ENCODE measurements at regions of chr9 and their contacts with region 1.

Region 1: DNA sequence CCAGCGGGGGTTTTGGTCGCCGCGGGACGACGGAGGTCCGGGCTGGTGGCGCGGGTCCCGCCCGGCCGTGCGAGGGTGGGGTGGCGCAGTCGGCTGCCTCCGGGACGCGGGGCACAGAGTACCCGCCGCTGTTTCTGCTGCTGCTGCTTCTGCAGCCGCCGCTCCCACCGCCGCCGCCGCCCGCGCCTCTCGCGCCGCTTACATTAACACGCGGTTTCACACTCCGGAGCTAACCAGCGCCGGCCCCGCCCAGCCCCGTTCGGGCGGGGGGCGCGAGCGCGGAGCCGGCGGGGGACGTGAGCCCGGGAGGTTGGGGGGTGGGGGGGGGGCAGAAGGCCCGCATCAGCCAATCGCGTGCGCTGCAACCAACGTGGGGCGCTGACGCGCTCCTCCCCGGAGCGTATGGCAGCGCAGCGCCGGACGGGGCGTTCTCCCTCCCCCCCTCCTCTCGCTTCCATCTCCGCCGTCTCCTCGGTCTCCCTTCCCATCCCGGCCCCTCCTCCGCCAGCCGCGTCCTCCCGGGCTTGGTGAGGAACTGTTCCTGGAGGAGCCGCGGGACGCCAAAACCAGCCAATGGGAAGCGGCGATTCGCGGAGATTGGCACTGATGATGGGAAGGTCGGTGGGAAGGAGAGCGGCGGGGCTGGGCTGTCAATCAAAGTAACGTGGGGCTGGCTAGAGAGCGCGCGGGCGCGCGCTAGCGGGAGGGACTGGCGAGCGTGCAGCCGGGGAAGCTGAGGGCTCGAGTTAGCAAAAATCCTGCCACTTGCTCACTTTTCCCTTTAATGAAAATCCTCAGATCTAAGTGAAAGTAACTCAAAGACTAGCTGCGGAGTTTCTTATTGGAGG is at the start of gene TLE1:
- DNase-seq: peak; percentile 100
- H3K4me3 ChIP-seq: peak within 1 kb of the TSS; percentile 64 to 66
- H3K27ac ChIP-seq: peak within 1 kb of the TSS; percentile 79 to 85
- H3K4me1 ChIP-seq: no peaks in the 10 kb centered on the region
- H3K27me3 ChIP-seq: no peaks in the 10 kb centered on the region
- CTCF ChIP-seq: peak in 1 of 4 experiments; percentile 15
- POLR2A ChIP-seq: peak; percentile 74
- total RNA-seq, gene TLE1: 61.0 to 89.5 TPM

Region 2: GRCh38 chr9:80797831-80798688 is 891.5 kb before region 1 on chr9:
- intact Hi-C with region 1: loop called (anchors 5 kb)
- DNase-seq: peak; percentile 52
- H3K4me3 ChIP-seq: no peak overlapping the region
- H3K27ac ChIP-seq: peak overlapping the region; percentile 15 to 38
- H3K4me1 ChIP-seq: no peaks in the 10 kb centered on the region
- H3K27me3 ChIP-seq: no peaks in the 10 kb centered on the region
- CTCF ChIP-seq: no peak
- POLR2A ChIP-seq: no peak

Region 3: DNA sequence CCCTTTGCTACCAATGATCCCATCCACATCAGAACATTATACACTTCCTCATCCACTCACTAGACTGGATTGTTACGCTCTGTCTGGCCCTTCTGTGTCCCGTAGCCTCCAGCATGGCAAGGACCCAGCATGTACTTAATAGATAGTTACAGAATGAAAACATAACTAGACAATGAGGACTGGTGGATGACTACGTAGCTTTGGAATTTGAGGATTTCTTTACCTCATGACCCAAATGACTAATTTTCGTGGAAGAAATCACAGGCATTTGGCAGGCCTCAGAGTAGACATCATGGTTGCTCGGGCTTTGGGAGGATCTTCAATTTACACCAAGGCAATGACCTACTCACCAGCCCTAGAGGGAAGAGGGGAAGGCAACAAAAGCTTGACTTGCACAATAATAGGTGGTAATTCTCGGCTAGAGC is 300.0 kb before region 1 on chr9:
- intact Hi-C with region 1: loop called (anchors 5 kb)
- DNase-seq: no peak
- H3K4me3 ChIP-seq: no peak overlapping the region
- H3K27ac ChIP-seq: no peak overlapping the region
- H3K4me1 ChIP-seq: no peaks in the 10 kb centered on the region
- H3K27me3 ChIP-seq: no peaks in the 10 kb centered on the region
- CTCF ChIP-seq: no peak
- POLR2A ChIP-seq: no peak

Region 4: GRCh38 chr9:81529556-81530195 is 159.9 kb before region 1 on chr9:
- intact Hi-C with region 1: loop called (anchors 10 kb)
- DNase-seq: peak; percentile 7
- H3K4me3 ChIP-seq: no peak overlapping the region
- H3K27ac ChIP-seq: no peak overlapping the region
- H3K4me1 ChIP-seq: peaks cover 6% of the 10 kb centered on the region
- H3K27me3 ChIP-seq: no peaks in the 10 kb centered on the region
- CTCF ChIP-seq: no peak
- POLR2A ChIP-seq: no peak

Region 5: GRCh38 chr9:81737853-81738507 is 48.4 kb after region 1 on chr9:
- intact Hi-C with region 1: no loop called
- DNase-seq: peak; percentile 31
- H3K4me3 ChIP-seq: no peak overlapping the region
- H3K27ac ChIP-seq: no peak overlapping the region
- H3K4me1 ChIP-seq: no peaks in the 10 kb centered on the region
- H3K27me3 ChIP-seq: no peaks in the 10 kb centered on the region
- CTCF ChIP-seq: no peak
- POLR2A ChIP-seq: no peak

Region 6: GRCh38 chr9:81848472-81848871 is 158.9 kb after region 1 on chr9:
- intact Hi-C with region 1: loop called (anchors 2 kb)
- DNase-seq: no peak
- H3K4me3 ChIP-seq: no peak overlapping the region
- H3K27ac ChIP-seq: no peak overlapping the region
- H3K4me1 ChIP-seq: no peaks in the 10 kb centered on the region
- H3K27me3 ChIP-seq: no peaks in the 10 kb centered on the region
- CTCF ChIP-seq: peak in 3 of 4 experiments; percentile 29 to 43 (median 40)
- POLR2A ChIP-seq: no peak

Measured in prostate gland (tissue), 2 donors.